ENCODE measurements at regions of chr13 and their contacts with region 1.

Region 1: GRCh38 chr13:105033999-105034398 is 1501.5 kb downstream of the EFNB2 start:
- DNase-seq: no peak
- H3K4me3 ChIP-seq: no peak overlapping the region
- CTCF ChIP-seq: no peak

Region 2: DNA sequence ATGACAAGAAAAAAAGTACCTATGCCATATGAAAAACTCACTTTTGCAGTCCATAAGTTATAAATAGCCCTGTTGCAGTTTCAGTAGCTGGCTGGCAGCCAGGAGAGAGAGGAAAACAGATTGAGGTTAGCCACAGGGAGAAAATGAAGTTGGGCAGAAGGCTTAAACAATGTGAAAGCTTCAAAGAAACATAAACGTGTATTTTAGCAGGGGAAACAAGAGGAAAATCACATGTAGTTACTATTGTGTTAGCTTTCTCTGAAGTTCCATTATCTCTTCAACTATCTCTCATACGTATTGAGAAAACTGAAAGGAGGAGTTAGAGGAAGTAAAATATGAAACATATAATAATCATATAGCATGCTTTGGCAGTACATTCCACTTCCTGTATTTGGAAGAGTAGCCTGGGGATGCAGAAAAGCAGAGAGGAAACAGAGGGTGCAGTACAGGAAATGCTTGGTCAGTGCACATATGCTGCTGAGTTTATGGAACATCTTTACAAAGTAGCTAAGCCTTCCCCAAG is 49.6 kb before region 1 on chr13:
- in situ Hi-C with region 1: loop called (anchors 5 kb)
- DNase-seq: peak; percentile 84
- H3K4me3 ChIP-seq: no peak overlapping the region
- CTCF ChIP-seq: no peak

Region 3: DNA sequence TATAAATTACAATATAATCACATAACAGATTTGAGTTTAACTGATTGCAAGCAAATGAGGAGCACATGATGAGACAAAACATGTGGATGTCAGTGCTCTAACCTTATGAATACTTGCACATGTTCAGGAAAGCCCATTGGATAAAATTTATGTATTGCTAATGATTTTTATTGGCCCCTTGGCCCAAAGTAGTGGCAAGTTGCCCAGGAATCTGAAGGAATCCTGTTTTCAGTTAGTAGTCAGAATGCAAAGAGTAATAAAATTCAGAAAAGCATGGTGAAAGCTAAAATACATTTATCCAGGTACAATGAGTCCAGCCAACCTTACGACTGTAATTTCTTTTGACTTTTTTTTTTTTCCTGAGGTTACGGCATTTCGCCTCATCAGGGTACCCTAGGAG is 38.0 kb before region 1 on chr13:
- in situ Hi-C with region 1: no loop called
- DNase-seq: no peak
- H3K4me3 ChIP-seq: no peak overlapping the region
- CTCF ChIP-seq: no peak

Region 4: DNA sequence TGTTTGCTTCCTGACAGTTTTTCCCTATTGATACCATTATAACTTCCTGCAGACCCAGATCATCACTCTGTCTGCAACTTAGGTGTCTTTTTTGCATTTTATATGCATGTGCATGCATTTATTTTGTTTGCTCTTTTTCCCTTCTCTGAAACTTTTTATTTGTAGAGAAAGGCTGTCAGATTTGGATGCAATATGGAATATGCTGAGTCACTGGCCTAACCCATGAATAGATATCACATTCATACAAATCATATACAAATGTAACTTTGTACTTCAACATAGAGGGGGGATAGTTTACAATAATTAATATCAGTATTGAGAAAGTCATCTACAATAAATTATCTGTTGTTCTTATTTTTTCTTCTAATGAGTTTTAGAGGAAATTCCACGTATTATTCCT is 36.5 kb after region 1 on chr13:
- in situ Hi-C with region 1: no loop called
- DNase-seq: no peak
- H3K4me3 ChIP-seq: no peak overlapping the region
- CTCF ChIP-seq: no peak